MCF 10A (cell line): ENCODE measurements at regions of chr16 and their contacts with region 1.

Region 1: DNA sequence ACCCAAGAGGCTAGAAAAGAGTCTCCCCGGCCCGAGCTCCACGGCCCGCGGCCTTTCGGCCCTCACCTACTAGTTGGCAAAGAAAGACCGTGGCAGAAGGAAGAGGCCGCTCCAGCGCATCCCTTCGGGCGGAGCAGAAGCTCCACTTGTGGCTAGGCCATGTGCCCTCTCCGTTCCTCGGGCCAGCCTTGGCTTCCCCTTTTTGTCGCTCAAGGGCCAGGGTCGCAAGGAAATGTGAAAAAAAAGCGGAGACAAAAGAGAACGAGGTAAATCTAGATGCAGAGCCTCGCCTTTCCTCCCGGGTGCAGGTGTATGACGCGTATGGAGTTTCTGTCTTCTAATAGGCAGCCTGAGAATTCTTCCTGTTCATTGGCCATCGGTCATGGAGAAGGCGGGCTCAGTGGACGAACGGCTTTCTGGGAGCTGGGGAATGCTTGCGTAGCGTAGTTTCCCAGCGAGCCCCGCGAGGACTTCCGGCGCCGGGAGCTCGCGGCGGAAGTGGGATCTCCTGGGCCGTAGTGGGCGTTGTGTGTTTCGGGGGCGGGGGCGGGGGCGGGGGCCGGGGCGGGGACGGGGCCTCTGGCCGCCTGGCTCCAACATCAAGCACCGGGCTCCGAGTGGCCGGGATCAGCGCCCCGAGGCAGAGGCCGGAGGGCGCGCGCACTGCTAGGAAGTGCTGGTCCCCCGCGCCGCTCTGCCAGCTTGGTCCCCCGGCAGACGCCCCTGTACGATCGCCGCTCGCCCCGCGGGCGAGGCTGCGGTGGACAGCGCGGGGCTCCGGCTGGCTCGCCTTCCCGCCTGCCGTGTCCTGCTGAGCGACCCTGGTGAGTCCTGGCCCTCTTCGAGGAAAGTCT is at the start of gene ZNF213:
- DNase-seq: peak; percentile 99
- H3K4me3 Mint-ChIP-seq: peak within 1 kb of the TSS; percentile 93
- H3K27ac Mint-ChIP-seq: peak within 1 kb of the TSS; percentile 95
- H3K4me1 Mint-ChIP-seq: peaks cover 1% of the 10 kb centered on the region
- H3K27me3 Mint-ChIP-seq: no peaks in the 10 kb centered on the region
- CTCF ChIP-seq: no peak
- total RNA-seq, gene ZNF213: 19.7 and 20.7 TPM in 2 replicates

Region 2: GRCh38 chr16:3059000-3059722 is 75.6 kb before region 1 on chr16:
- CTCF ChIA-PET with region 1: interaction called, 48 read pairs
- POLR2A ChIA-PET with region 1: interaction called, 47 read pairs
- intact Hi-C with region 1: loop called (anchors 1 kb)
- DNase-seq: peak; percentile 84
- H3K4me3 Mint-ChIP-seq: peak overlapping the region; percentile 78
- H3K27ac Mint-ChIP-seq: peak overlapping the region; percentile 74
- H3K4me1 Mint-ChIP-seq: no peaks in the 10 kb centered on the region
- H3K27me3 Mint-ChIP-seq: no peaks in the 10 kb centered on the region
- CTCF ChIP-seq: peak; percentile 90

Region 3: DNA sequence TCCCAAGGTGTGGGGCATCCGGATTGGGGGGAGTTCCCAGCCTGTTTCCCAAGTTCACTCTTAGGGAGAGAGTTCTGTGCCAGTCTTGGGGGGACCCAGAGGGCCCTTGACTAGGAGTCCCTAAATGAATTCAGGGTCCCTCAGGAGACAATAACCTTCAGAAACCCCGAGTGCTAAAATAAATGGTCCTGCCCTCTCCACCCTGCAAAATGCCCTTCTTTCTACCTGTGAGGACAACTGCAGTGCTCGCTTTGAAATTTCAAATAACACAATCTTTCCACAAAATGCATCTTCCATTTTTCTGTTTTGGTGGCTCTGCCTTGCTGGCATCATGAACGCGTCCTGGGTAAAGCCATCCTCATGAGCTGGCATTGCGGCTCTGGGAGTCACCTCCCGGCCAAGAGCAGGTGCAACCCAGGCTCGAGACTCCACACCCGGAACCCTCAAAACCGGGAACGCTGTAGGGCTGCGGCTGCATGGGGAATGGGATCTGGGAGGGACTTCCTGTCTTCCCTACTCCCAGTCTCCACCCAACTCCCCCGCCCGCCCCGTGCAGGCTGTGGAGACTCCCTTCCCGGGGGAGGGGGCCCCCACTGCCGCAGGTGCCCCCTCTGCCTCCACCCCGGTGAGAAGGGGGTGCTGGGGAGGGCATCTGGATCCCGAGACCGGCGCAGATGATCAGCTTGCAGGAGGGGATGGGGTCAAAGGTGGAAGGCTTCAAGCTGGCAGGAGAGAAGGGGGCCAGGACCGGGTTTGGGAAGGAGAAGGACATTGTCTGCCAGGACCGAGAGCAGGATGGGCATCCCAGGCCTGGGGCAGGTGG is 22.5 kb before region 1 on chr16 and contains the start of gene ZNF205:
- CTCF ChIA-PET with region 1: interaction called, 34 read pairs
- POLR2A ChIA-PET with region 1: interaction called, 33 read pairs
- intact Hi-C with region 1: no loop called
- DNase-seq: peak; percentile 79
- H3K4me3 Mint-ChIP-seq: peak within 1 kb of the TSS; percentile 85
- H3K27ac Mint-ChIP-seq: peak within 1 kb of the TSS; percentile 29
- H3K4me1 Mint-ChIP-seq: peaks cover 13% of the 10 kb centered on the region
- H3K27me3 Mint-ChIP-seq: no peaks in the 10 kb centered on the region
- CTCF ChIP-seq: no peak
- total RNA-seq, gene ZNF205: 11.8 and 12.1 TPM in 2 replicates

Region 4: GRCh38 chr16:3123986-3124886 is 10.6 kb before region 1 on chr16:
- CTCF ChIA-PET with region 1: interaction called, 12 read pairs
- POLR2A ChIA-PET with region 1: interaction called, 32 read pairs
- intact Hi-C with region 1: no loop called
- DNase-seq: peak; percentile 96
- H3K4me3 Mint-ChIP-seq: peak overlapping the region; percentile 91
- H3K27ac Mint-ChIP-seq: peak overlapping the region; percentile 90
- H3K4me1 Mint-ChIP-seq: peaks cover 21% of the 10 kb centered on the region
- H3K27me3 Mint-ChIP-seq: no peaks in the 10 kb centered on the region
- CTCF ChIP-seq: peak; percentile 21

Region 5: GRCh38 chr16:3150346-3151218 is 15.8 kb after region 1 on chr16:
- CTCF ChIA-PET with region 1: interaction called, 75 read pairs
- POLR2A ChIA-PET with region 1: interaction called, 105 read pairs
- intact Hi-C with region 1: loop called (anchors 1 kb)
- DNase-seq: peak; percentile 98
- H3K4me3 Mint-ChIP-seq: peak overlapping the region; percentile 83
- H3K27ac Mint-ChIP-seq: peak overlapping the region; percentile 87
- H3K4me1 Mint-ChIP-seq: peaks cover 10% of the 10 kb centered on the region
- H3K27me3 Mint-ChIP-seq: no peaks in the 10 kb centered on the region
- CTCF ChIP-seq: no peak

Region 6: DNA sequence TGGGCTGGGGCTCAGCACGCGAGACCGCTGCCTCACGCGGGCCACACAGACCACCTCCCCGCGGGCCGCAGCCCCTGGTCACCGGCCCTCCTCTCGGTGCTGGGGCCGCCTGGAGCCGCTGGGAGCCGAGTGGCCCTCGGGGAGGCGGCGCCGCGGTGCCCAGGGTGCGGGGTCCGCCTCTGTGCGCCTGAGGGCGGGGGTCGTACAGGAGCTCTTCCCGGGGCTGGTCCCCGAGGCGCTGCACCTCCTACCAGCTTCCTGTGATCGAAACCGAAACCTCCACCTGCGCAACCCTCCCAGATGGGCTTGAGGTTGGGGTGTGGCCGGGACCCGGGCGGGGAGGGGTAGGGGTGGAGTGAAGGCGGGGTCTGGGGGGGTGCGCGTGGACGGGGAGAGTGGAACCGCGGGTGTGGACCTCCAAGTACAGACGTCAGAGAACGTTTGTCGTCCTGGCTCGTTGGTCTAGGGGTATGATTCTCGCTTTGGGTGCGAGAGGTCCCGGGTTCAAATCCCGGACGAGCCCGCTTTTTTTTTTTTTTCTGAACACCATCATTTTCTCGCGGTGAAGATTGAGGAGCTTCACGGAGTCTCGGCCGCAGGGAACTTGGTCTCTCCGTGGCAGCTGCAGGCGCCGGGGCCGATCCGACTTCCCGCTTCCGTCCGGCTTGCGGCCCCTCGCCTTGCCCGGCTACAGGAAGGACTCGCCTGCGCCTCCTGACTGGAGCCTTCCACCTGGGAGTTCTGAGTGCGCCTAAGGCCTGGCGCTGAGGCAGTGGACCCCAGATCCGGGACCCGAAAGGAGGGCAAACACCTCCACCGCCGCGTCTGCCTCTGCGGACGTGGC is 23.9 kb after region 1 on chr16:
- CTCF ChIA-PET with region 1: interaction called, 10 read pairs
- POLR2A ChIA-PET with region 1: interaction called, 56 read pairs
- intact Hi-C with region 1: no loop called
- DNase-seq: peak; percentile 95
- H3K4me3 Mint-ChIP-seq: peak overlapping the region; percentile 83
- H3K27ac Mint-ChIP-seq: peak overlapping the region; percentile 98
- H3K4me1 Mint-ChIP-seq: no peaks in the 10 kb centered on the region
- H3K27me3 Mint-ChIP-seq: no peaks in the 10 kb centered on the region
- CTCF ChIP-seq: no peak